Activated CD4-positive, alpha-beta T cell treated with anti-CD3 and anti-CD28 coated beads, Interleukin-2, amount 10 ng/mL, durations not matched to agents 24 days and 14 days (primary cell): ENCODE measurements at regions of chr7 and their contacts with region 1.

Region 1: DNA sequence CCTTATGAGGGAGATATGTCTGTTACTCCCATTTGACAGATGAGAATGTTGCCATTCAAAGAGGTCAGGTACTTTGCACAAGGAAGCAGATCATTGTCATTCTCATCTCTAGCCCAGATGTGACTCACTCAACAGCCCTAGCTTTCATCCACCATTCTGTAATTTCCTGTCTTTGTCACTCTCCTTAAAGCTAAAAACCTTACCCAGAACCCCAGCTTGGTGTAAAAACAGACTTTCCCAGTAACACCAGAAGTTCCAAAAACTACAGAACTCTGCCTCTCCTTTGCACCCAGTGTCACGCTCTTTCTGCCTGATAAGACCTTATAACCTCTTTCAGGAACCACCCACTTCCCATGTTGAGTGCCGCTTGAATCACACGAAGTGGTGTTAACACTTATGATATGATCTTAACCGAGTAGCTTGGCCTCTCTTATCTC is 89.1 kb upstream of the SP4 start:
- DNase-seq: peak; percentile 87
- H3K4me3 Mint-ChIP-seq: peak overlapping the region; percentile 13
- H3K27ac Mint-ChIP-seq: peak overlapping the region; percentile 87
- H3K4me1 Mint-ChIP-seq: peaks cover 47% of the 10 kb centered on the region
- H3K27me3 Mint-ChIP-seq: no peaks in the 10 kb centered on the region

Region 2: DNA sequence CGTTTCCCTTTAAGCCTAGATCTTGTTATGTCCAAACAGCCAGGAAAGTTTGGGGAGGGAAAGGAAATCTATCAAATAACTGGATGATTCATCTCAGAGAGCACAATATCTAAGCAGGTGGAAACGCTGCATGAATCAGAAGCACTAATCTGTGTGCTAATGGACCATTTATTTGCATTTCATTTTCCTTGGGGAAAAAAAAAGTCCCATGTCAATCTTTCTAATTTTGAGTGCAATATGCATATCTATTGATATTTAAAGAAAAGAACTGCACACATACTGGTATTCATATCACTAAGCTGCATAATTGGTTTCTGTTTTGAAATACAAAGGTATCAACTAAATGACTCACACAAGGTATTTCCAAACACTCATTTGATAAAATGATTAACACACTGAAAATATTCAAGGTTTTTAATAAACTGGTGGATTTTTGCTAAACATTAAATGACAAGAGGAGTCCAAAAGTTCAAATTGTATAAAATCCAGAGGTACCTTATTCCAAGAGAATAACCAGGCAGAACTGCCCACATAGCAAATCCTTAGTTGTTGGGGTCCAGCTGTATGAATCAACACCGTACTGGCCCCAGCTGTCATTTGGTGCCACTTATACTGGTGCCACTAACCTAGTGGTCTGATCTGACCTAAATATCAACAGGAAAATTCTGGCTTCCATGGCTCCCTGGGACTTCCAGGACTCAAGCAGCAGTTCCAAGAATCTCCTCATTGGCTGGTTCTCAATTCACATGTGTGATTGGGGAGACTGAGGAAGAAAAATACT is 33.1 kb before region 1 on chr7:
- intact Hi-C with region 1: loop called (anchors 2 kb)
- DNase-seq: no peak
- H3K4me3 Mint-ChIP-seq: no peak overlapping the region
- H3K27ac Mint-ChIP-seq: peak overlapping the region; percentile 43
- H3K4me1 Mint-ChIP-seq: peaks cover 15% of the 10 kb centered on the region
- H3K27me3 Mint-ChIP-seq: no peaks in the 10 kb centered on the region

Region 3: GRCh38 chr7:21355406-21355874 is 16.7 kb after region 1 on chr7:
- intact Hi-C with region 1: loop called (anchors 1 kb)
- DNase-seq: peak; percentile 90
- H3K4me3 Mint-ChIP-seq: peak overlapping the region; percentile 77
- H3K27ac Mint-ChIP-seq: peak overlapping the region; percentile 97
- H3K4me1 Mint-ChIP-seq: peaks cover 76% of the 10 kb centered on the region
- H3K27me3 Mint-ChIP-seq: no peaks in the 10 kb centered on the region

Region 4: GRCh38 chr7:21383227-21384220 is 44.8 kb after region 1 on chr7:
- intact Hi-C with region 1: loop called (anchors 2 kb)
- DNase-seq: peak; percentile 66
- H3K4me3 Mint-ChIP-seq: peak overlapping the region; percentile 16
- H3K27ac Mint-ChIP-seq: peak overlapping the region; percentile 55
- H3K4me1 Mint-ChIP-seq: peaks cover 18% of the 10 kb centered on the region
- H3K27me3 Mint-ChIP-seq: no peaks in the 10 kb centered on the region

Region 5: GRCh38 chr7:21497072-21497471 is 158.3 kb after region 1 on chr7:
- intact Hi-C with region 1: no loop called
- DNase-seq: no peak
- H3K4me3 Mint-ChIP-seq: no peak overlapping the region
- H3K27ac Mint-ChIP-seq: no peak overlapping the region
- H3K4me1 Mint-ChIP-seq: no peaks in the 10 kb centered on the region
- H3K27me3 Mint-ChIP-seq: no peaks in the 10 kb centered on the region